A549 (cell line): ENCODE measurements at regions of chr12 and their contacts with region 1.

Region 1: DNA sequence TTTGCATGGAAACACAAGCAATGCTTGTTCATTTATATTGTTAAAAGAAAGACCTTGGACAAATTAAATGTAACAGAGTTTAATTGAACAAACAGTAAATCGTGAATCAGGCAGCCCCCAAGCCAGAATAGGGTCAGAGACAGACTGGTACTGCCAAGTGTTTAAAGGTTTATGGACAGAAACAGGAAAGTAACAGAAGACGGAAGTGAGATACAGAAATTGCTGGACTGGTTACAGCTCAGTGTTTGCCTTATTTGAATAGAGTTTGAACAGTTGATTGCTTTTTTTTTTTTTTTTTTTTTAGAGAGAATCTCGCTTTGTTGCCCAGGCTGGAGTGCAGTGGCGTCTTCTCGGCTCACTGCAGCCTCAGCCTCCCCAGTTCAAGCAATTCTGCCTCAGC is 50.3 kb downstream of the DAO start:
- DNase-seq: no peak
- ATAC-seq: no peak
- H3K4me3 ChIP-seq: no peak overlapping the region
- H3K27ac ChIP-seq: no peak overlapping the region
- H3K4me1 ChIP-seq: no peaks in the 10 kb centered on the region
- CTCF ChIP-seq: no peak
- EP300 ChIP-seq: no peak
- POLR2A ChIP-seq: no peak
- RAD21 ChIP-seq: no peak

Region 2: DNA sequence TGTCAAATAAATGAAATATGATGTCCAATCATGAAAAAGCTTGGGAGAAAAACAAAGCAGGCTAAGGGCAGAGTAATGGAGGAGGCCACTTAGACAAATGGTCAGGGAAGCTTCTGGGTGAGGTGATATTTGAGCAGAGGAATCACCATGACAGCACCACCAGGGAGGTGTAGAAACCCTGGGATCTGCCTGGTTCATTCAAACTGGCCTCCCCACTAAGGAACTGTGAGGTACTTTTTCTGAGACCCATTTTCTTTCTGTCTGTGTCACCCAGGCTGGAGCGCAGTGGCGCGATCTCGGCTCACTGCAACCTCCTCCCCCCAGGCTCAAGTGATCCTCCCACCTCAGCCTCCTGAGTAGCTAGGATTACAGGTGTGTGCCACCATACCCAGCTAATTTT is 65.0 kb before region 1 on chr12:
- CTCF ChIA-PET with region 1: no interaction called
- POLR2A ChIA-PET with region 1: interaction called, 13 read pairs
- DNase-seq: no peak
- ATAC-seq: no peak
- H3K4me3 ChIP-seq: no peak overlapping the region
- H3K27ac ChIP-seq: no peak overlapping the region
- H3K4me1 ChIP-seq: no peaks in the 10 kb centered on the region
- CTCF ChIP-seq: no peak
- EP300 ChIP-seq: no peak
- POLR2A ChIP-seq: no peak
- RAD21 ChIP-seq: no peak